T-cell (primary cell): ENCODE measurements at regions of chr1 and their contacts with region 1.

Region 1: GRCh38 chr1:243482141-243483022 is 226.5 kb downstream of the SDCCAG8 start:
- DNase-seq: peak in 2 of 35 experiments; percentile 9 to 16
- ATAC-seq: peak; percentile 22 to 55 (median 49)
- H3K4me3 ChIP-seq: peak overlapping the region; percentile 47 to 76
- H3K4me3 Mint-ChIP-seq: peak overlapping the region; percentile 61 to 81 (median 78)
- H3K27ac ChIP-seq: no peak overlapping the region
- H3K27ac Mint-ChIP-seq: no peak overlapping the region
- H3K4me1 ChIP-seq: peaks cover 7 to 17% of the 10 kb centered on the region in 2 experiments
- H3K4me1 Mint-ChIP-seq: peaks cover 16 to 28% (median 26%) of the 10 kb centered on the region in 3 donors
- H3K27me3 ChIP-seq: peaks cover 0 to 12% of the 10 kb centered on the region in 2 experiments
- H3K27me3 Mint-ChIP-seq: no peaks in the 10 kb centered on the region

Region 2: GRCh38 chr1:243471754-243472745 is 10.3 kb before region 1 on chr1:
- CTCF ChIA-PET with region 1: no interaction called
- POLR2A ChIA-PET with region 1: interaction called in 1 of 2 experiments, 10 read pairs
- DNase-seq: no peak
- ATAC-seq: no peak
- H3K4me3 ChIP-seq: no peak overlapping the region
- H3K4me3 Mint-ChIP-seq: no peak overlapping the region
- H3K27ac ChIP-seq: no peak overlapping the region
- H3K27ac Mint-ChIP-seq: no peak overlapping the region
- H3K4me1 ChIP-seq: no peaks in the 10 kb centered on the region
- H3K4me1 Mint-ChIP-seq: peaks cover 9 to 15% (median 14%) of the 10 kb centered on the region in 3 donors
- H3K27me3 ChIP-seq: no peaks in the 10 kb centered on the region
- H3K27me3 Mint-ChIP-seq: no peaks in the 10 kb centered on the region

Region 3: GRCh38 chr1:243495442-243496172 is 13.2 kb after region 1 on chr1:
- CTCF ChIA-PET with region 1: interaction called in 1 of 2 experiments, 6 read pairs
- POLR2A ChIA-PET with region 1: interaction called in 1 of 2 experiments, 14 read pairs
- DNase-seq: no peak
- ATAC-seq: no peak
- H3K4me3 ChIP-seq: no peak overlapping the region
- H3K4me3 Mint-ChIP-seq: no peak overlapping the region
- H3K27ac ChIP-seq: no peak overlapping the region
- H3K27ac Mint-ChIP-seq: peak overlapping the region in 1 of 2 donors; percentile 34
- H3K4me1 ChIP-seq: no peaks in the 10 kb centered on the region
- H3K4me1 Mint-ChIP-seq: peaks cover 0 to 2% (median 0%) of the 10 kb centered on the region in 3 donors
- H3K27me3 ChIP-seq: no peaks in the 10 kb centered on the region
- H3K27me3 Mint-ChIP-seq: no peaks in the 10 kb centered on the region